Breast epithelium (tissue), 4 donors: ENCODE measurements at regions of chr1 and their contacts with region 1.

Region 1: DNA sequence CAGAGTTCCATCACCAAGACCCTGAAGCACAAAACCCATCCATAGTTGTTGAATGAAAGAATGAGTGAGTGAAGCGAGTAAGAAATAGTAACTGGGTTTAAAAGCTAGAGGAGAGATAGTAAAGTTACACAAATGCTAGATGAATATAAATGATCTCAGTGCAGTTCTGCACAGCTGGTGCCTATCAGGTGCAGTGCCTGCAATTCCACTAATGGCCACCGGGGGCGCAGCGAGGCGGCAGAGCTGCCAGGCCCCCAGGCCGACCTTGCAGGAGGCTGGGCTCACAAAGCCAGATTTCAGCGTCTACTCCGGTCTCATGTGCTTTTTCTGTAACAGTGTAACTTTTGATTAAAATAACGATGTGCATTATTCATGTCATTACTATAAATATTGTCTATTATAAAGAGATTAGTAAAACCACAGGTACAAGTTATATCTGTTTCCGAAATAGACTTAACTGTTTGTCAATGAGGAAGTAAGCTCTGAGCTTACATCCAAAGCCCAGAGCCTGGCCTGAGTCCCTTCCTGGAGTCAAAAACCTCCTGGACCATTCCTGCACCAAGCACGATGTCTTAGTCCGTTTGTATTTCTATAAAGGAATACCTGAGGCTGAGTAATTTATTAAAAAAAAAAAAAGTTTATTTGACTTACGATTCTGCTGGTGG is 477.6 kb downstream of the NPHP4 start:
- DNase-seq: peak; percentile 52 to 78
- H3K4me3 ChIP-seq: no peak overlapping the region
- H3K27ac ChIP-seq: no peak overlapping the region
- H3K4me1 ChIP-seq: no peaks in the 10 kb centered on the region
- H3K27me3 ChIP-seq: peaks cover 0 to 11% of the 10 kb centered on the region in 2 donors
- CTCF ChIP-seq: peak; percentile 91 to 95 (median 94)
- POLR2A ChIP-seq: no peak

Region 2: DNA sequence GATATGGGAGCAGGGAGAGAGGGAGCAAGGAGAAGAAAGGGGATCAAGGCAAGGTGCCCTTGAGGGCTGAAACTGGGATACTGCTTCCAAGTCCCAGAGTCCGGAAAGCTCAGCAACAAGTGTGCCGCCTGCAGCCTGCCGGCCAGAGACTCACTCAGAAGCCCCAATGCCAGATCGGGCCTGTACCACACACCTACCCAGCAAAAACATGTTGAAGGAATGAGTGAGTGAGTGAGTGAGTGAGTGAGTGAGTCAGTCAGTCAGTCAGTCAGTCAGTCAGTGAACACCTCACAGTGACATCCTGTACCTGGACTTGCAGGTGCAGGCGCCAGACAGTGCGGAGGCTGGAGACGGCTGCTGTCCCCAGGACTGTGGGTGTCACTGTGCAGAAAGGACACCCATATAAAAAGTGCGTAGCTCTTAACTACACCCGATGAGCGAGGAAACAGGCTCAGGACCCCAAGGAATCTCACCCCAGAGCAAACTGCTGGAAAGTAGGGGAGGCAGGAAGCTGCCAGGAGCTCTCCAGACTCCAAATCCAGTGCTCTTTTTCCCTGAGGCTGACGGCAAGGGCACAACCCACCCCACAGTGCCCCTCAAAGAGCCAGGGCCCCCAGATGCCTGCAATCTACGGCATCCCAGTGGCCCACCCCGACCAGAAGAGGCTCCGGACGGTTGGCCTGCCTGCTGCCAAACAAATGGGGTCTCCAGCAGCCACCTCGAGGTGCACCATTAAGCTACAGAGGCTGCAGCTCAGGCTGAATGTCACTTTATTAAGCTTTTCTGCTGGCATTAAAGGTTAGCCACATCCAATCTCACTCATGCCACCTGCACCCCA is 215.8 kb after region 1 on chr1:
- intact Hi-C with region 1: loop called (anchors 10 kb)
- DNase-seq: peak in 1 of 2 donors; percentile 38
- H3K4me3 ChIP-seq: no peak overlapping the region
- H3K27ac ChIP-seq: no peak overlapping the region
- H3K4me1 ChIP-seq: no peaks in the 10 kb centered on the region
- H3K27me3 ChIP-seq: peaks cover 0 to 50% of the 10 kb centered on the region in 2 donors
- CTCF ChIP-seq: no peak
- POLR2A ChIP-seq: no peak